GM10248 (cell line): ENCODE measurements at regions of chr9 and their contacts with region 1.

Region 1: GRCh38 chr9:34646211-34647083 is at the start of gene GALT:
- DNase-seq: peak; percentile 97
- CTCF ChIP-seq: peak; percentile 57

Region 2: GRCh38 chr9:34484682-34485081 is 161.8 kb before region 1 on chr9:
- CTCF ChIA-PET with region 1: no interaction called
- POLR2A ChIA-PET with region 1: no interaction called
- DNase-seq: no peak
- CTCF ChIP-seq: no peak

Region 3: GRCh38 chr9:34562136-34562745 is 84.2 kb before region 1 on chr9:
- CTCF ChIA-PET with region 1: no interaction called
- POLR2A ChIA-PET with region 1: no interaction called
- DNase-seq: no peak
- CTCF ChIP-seq: peak; percentile 40

Region 4: GRCh38 chr9:34665381-34666250 is 19.2 kb after region 1 on chr9:
- CTCF ChIA-PET with region 1: interaction called, 84 read pairs
- POLR2A ChIA-PET with region 1: interaction called, 3 read pairs
- DNase-seq: peak; percentile 94
- CTCF ChIP-seq: no peak

Region 5: GRCh38 chr9:34717996-34718614 is 71.7 kb after region 1 on chr9:
- CTCF ChIA-PET with region 1: no interaction called
- POLR2A ChIA-PET with region 1: no interaction called
- DNase-seq: no peak
- CTCF ChIP-seq: no peak